ENCODE measurements at regions of chr22 and their contacts with region 1.

Region 1: DNA sequence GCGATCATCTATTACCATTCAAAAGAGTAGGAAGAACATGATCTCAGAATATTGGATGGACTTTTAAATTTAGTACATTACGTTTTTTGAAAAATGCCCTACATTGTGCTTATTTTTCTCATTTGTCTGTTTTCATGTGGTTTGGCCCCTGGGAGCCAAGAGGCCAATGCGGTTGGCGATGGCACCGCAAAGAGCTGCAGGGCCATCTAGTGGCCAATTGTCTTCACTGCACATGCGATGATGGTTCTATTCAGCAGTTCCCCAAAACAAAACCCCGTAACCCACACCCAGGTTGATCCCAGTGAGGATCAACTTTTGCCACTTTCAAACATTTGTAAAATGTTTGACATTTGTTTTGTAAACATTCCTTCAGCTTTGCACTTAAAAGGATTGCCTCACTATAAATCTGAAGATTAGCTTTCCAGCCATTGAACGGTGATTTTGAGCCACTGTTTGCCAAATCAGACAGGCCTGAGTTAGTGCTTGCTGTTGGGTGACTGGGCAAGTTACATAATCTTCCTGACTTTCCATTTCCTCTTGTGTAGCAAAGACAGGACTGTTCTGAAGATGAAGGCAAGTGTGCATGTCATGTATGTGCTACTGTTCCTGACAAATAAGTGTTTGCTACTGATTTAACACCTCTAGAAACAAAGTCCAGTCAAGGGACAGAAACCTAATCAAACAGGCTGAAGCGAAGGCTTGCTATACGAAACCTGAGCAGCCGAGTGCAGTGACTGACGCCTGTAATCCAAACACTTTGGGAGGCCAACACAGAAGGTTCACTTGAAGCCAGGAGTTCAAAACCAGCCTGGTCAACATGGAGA is 29.2 kb upstream of the XBP1 start:
- DNase-seq: peak; percentile 7
- H3K4me3 ChIP-seq: no peak overlapping the region
- CTCF ChIP-seq: peak; percentile 89

Region 2: DNA sequence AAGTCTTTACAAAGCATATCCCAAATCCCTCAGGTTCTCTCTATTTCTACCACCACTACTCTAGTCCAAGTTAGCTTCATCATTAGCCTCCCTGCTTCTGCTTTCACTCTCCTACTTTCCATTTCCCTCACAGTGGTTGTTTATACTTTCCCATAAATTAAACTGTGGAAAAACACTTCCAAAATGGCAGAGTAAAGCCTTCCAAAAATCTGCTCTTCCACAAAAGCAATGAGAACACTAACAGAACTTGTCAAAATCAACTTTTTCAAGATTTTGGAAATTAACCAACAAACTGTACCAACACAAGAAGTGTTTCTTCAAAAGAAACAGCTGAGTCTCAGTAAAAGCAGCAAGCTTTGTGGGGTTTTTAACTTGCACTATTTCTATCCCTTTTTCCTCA is 221.8 kb before region 1 on chr22:
- CTCF ChIA-PET with region 1: interaction called, 39 read pairs
- POLR2A ChIA-PET with region 1: no interaction called
- DNase-seq: no peak
- H3K4me3 ChIP-seq: no peak overlapping the region
- CTCF ChIP-seq: no peak

Region 3: GRCh38 chr22:28810821-28811491 is 18.6 kb before region 1 on chr22:
- CTCF ChIA-PET with region 1: interaction called, 59 read pairs
- POLR2A ChIA-PET with region 1: no interaction called
- DNase-seq: no peak
- H3K4me3 ChIP-seq: no peak overlapping the region
- CTCF ChIP-seq: no peak

Region 4: DNA sequence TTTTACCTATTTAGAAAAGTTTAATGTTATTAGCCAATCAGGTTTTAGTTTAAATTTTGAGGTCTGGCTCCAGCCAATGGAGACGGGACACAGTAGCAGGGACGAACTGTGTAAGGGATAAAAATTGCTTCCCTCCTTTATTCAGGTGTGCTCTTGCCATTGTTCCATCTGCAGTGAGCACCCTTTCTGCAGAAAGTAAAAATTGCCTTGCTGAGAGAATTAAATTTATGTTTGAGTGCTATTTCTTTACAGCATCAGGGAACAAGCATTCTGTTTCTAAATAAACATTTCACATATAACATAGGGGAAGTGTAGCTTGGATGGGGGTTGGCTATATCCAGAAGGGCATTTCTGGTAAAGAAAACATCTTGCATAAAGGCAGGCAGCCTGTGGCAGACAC is 17.4 kb after region 1 on chr22:
- CTCF ChIA-PET with region 1: interaction called, 13 read pairs
- POLR2A ChIA-PET with region 1: no interaction called
- DNase-seq: no peak
- H3K4me3 ChIP-seq: no peak overlapping the region
- CTCF ChIP-seq: no peak

Measured in AG04449 (cell line).